ENCODE measurements at regions of chr20 and their contacts with region 1.

Region 1: GRCh38 chr20:20702330-20703245 is 9.9 kb downstream of the RALGAPA2 start:
- DNase-seq: no peak
- H3K4me3 ChIP-seq: no peak overlapping the region
- H3K27ac ChIP-seq: no peak overlapping the region
- H3K4me1 ChIP-seq: peaks cover 0 to 5% of the 10 kb centered on the region in 2 donors
- H3K27me3 ChIP-seq: no peaks in the 10 kb centered on the region
- CTCF ChIP-seq: no peak

Region 2: GRCh38 chr20:20743511-20744169 is 41.1 kb after region 1 on chr20:
- intact Hi-C with region 1: loop called (anchors 5 kb)
- DNase-seq: peak in 1 of 2 donors; percentile 81
- H3K4me3 ChIP-seq: peak overlapping the region in 1 of 2 donors; percentile 4
- H3K27ac ChIP-seq: peak overlapping the region; percentile 73 to 77
- H3K4me1 ChIP-seq: peaks cover 0 to 10% of the 10 kb centered on the region in 2 donors
- H3K27me3 ChIP-seq: no peaks in the 10 kb centered on the region
- CTCF ChIP-seq: no peak

Region 3: GRCh38 chr20:20761301-20761700 is 58.7 kb after region 1 on chr20:
- intact Hi-C with region 1: no loop called
- DNase-seq: no peak
- H3K4me3 ChIP-seq: no peak overlapping the region
- H3K27ac ChIP-seq: no peak overlapping the region
- H3K4me1 ChIP-seq: no peaks in the 10 kb centered on the region
- H3K27me3 ChIP-seq: no peaks in the 10 kb centered on the region
- CTCF ChIP-seq: no peak

Measured in ascending aorta (tissue), 2 donors.